A673 (cell line): ENCODE measurements at regions of chr20 and their contacts with region 1.

Region 1: DNA sequence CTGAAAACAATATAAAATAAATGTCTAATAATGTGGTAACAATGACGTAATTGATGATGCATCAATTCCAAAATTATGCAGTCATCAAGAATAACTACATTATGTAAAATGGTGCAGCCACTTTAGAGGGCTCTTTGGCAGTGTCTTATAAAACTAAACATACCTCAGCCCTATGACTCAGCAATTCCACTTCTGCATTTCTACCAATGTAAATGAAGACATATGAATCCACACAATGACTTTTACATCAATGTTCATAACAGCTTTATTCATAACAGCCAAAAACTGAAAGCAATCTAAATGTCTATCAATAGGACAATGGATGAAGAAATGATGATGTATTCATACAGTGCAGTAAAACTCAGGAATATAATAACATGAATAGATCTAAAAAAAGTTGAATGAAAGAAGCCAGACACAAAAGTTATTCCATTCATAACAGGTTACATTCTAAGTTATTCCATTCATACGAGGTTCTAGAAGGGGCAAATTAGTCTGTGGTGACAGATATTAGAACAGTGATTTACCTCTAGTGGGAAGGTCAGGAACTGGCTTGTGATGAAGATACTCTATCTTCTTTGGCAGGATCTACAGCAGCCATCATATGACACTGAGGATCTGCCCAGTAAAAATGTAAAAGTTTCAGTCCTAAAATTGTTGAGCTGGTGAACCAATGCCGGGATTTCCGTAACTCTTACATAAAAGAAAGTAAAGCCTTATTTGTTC is 396.1 kb downstream of the PLCB1 start:
- DNase-seq: no peak
- H3K4me3 ChIP-seq: no peak overlapping the region
- H3K27ac ChIP-seq: no peak overlapping the region
- H3K4me1 ChIP-seq: peaks cover 9% of the 10 kb centered on the region
- H3K27me3 ChIP-seq: no peaks in the 10 kb centered on the region
- CTCF ChIP-seq: no peak

Region 2: GRCh38 chr20:8007490-8007889 is 520.7 kb before region 1 on chr20:
- CTCF ChIA-PET with region 1: no interaction called
- POLR2A ChIA-PET with region 1: no interaction called
- intact Hi-C with region 1: no loop called
- DNase-seq: no peak
- H3K4me3 ChIP-seq: no peak overlapping the region
- H3K27ac ChIP-seq: no peak overlapping the region
- H3K4me1 ChIP-seq: peaks cover 1% of the 10 kb centered on the region
- H3K27me3 ChIP-seq: no peaks in the 10 kb centered on the region
- CTCF ChIP-seq: no peak

Region 3: DNA sequence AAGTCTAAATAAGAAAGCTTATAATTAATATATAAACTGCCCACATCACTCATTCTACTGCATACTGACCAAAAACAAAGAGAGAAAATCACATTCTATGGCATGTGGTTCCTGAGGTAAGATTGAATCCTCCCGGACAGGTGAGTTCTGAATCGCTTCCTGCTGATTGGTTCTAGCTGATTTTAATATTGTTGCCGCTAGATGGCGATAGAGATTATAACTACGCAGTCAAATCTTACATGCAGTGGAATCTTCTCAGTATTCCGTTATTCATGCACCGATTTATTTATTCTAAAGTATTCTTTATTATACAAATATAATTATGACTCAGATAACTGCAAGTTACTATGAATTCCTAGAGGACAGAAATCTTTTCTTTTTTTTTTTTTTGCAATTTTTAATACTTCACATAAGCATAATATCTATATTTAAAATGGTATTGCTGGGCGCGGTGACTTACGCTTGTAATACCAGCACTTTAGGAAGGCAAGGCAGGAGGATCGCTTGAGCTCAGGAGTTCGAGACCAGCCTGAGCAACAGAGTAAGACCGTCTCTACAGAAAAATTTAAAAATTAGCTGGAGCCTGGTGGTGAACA is 484.4 kb before region 1 on chr20:
- CTCF ChIA-PET with region 1: no interaction called
- POLR2A ChIA-PET with region 1: no interaction called
- intact Hi-C with region 1: loop called (anchors 5 kb)
- DNase-seq: peak; percentile 56
- H3K4me3 ChIP-seq: no peak overlapping the region
- H3K27ac ChIP-seq: no peak overlapping the region
- H3K4me1 ChIP-seq: no peaks in the 10 kb centered on the region
- H3K27me3 ChIP-seq: peaks cover 9% of the 10 kb centered on the region
- CTCF ChIP-seq: peak; percentile 75

Region 4: GRCh38 chr20:8664778-8665177 is 136.6 kb after region 1 on chr20:
- CTCF ChIA-PET with region 1: no interaction called
- POLR2A ChIA-PET with region 1: no interaction called
- intact Hi-C with region 1: no loop called
- DNase-seq: no peak
- H3K4me3 ChIP-seq: no peak overlapping the region
- H3K27ac ChIP-seq: no peak overlapping the region
- H3K4me1 ChIP-seq: no peaks in the 10 kb centered on the region
- H3K27me3 ChIP-seq: peaks cover 5% of the 10 kb centered on the region
- CTCF ChIP-seq: 0 out of 2 replicates have a peak, but pooled peaks have one; percentile 11